ENCODE measurements at regions of chr19 and their contacts with region 1.

Region 1: GRCh38 chr19:1445185-1445931 is 4.6 kb upstream of the APC2 start:
- DNase-seq: peak; percentile 79
- H3K4me3 Mint-ChIP-seq: peak overlapping the region; percentile 62
- H3K27ac Mint-ChIP-seq: no peak overlapping the region
- H3K4me1 Mint-ChIP-seq: peaks cover 28% of the 10 kb centered on the region
- H3K27me3 Mint-ChIP-seq: peaks cover 29% of the 10 kb centered on the region

Region 2: GRCh38 chr19:1406774-1407499 is 38.4 kb before region 1 on chr19:
- CTCF ChIA-PET with region 1: no interaction called
- intact Hi-C with region 1: no loop called
- DNase-seq: peak; percentile 98
- H3K4me3 Mint-ChIP-seq: peak overlapping the region; percentile 69
- H3K27ac Mint-ChIP-seq: peak overlapping the region; percentile 81
- H3K4me1 Mint-ChIP-seq: peaks cover 43% of the 10 kb centered on the region
- H3K27me3 Mint-ChIP-seq: peaks cover 5% of the 10 kb centered on the region

Region 3: DNA sequence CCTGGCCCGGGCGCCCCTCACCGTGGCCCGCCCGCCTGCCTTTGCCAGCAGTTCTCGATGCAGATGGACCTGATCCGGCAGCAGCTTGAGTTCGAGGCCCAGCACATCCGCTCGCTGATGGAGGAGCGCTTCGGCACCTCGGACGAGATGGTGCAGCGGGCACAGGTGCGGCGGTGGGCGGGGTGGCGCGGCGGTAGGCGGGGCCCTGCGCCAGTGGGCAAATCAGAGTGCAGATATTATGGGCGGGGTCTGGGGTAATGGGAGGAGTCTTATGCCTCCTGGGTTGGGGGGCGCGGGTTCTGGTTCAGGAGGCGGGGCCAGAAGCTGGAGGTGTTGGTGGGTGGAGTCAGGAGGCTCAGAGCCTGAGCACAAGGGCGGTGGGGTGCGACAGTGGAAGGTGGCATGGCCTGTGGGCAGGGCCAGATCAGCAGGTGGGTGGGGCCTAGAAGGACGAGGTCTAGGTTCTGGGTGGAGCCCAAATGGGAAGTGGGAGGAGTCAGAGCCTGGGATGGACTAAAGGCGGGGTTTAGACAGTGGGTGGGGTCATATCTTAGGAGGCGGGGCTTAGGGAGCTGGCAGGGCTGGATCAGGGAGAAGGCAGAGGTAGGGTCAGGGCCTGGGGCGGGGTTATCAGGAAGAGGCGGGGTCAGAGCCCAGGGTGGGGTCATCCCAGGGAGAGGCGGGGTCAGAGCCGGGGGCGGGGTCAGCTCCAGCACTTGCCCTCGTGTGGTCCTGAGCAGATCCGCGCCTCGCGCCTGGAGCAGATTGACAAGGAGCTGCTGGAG is 10.2 kb after region 1 on chr19:
- CTCF ChIA-PET with region 1: interaction called, 11 read pairs
- intact Hi-C with region 1: no loop called
- DNase-seq: peak; percentile 72
- H3K4me3 Mint-ChIP-seq: no peak overlapping the region
- H3K27ac Mint-ChIP-seq: no peak overlapping the region
- H3K4me1 Mint-ChIP-seq: peaks cover 17% of the 10 kb centered on the region
- H3K27me3 Mint-ChIP-seq: peaks cover 43% of the 10 kb centered on the region

Measured in activated naive CD4-positive, alpha-beta T cell treated with anti-CD3 and anti-CD28 coated beads for 36 hours (primary cell).